ENCODE measurements at regions of chr19 and their contacts with region 1.

Region 1: DNA sequence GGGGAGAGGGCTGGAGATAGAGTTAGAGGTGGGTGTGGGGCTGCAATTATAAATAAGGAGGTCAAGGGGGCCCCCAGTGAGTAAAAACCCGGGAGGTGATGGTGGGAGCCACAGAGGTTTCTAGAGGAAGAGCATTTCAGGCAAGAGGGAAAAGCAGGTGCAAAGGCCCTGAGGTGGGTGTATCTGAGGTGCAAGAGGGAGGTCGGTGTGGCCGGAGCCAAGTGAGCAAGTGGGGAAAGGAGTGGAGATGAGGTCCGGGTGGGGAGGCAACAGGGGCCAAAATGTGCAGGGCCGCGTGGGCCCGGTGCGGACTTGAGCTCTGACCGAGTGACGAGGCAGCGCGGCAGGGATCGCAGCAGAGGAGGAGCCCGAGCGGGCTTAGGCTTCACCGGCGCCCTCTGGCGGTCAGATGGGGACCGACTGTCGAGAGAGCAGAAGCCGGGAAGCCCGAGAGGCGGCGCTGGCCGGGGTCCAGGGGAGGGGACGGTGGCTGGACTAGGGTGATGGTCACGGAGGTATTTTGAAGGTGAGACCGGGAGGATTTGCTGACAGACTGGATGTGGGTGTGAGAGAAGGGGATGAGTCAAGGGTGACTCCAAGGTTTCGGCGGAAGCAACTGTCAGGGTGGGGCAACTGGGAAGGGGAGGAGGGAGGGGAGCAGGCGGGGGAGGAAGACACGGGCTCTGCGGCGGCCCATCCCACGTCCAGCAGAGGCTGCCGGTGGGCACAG is 17.7 kb upstream of the SPACA4 start:
- DNase-seq: peak; percentile 93 to 96 (median 94)
- ATAC-seq: peak; percentile 92
- H3K4me3 ChIP-seq: peak overlapping the region; percentile 37
- H3K27ac ChIP-seq: peak overlapping the region; percentile 70; the same call in 2 of the 3 replicates
- H3K4me1 ChIP-seq: peaks cover 3 to 30% of the 10 kb centered on the region in 2 experiments; a peak in 2 of 5 replicates
- H3K27me3 ChIP-seq: no peaks in the 10 kb centered on the region
- CTCF ChIP-seq: peak; percentile 98 to 99 (median 99)
- EP300 ChIP-seq: no peak; the same call in none of the 2 replicates
- POLR2A ChIP-seq: peak; percentile 60
- RAD21 ChIP-seq: peak; percentile 60 to 77

Region 2: GRCh38 chr19:48321622-48322591 is 266.9 kb before region 1 on chr19:
- CTCF ChIA-PET with region 1: no interaction called
- POLR2A ChIA-PET with region 1: interaction called, 3 read pairs
- in situ Hi-C with region 1: loop called (anchors 5 kb)
- intact Hi-C with region 1: loop called (anchors 5 kb)
- DNase-seq: peak; percentile 95 to 98 (median 96)
- ATAC-seq: peak; percentile 80
- H3K4me3 ChIP-seq: peak overlapping the region; percentile 57
- H3K27ac ChIP-seq: peak overlapping the region; percentile 99
- H3K4me1 ChIP-seq: peaks cover 26 to 53% of the 10 kb centered on the region in 2 experiments
- H3K27me3 ChIP-seq: no peaks in the 10 kb centered on the region
- CTCF ChIP-seq: peak; percentile 20 to 37 (median 22); a peak in 4 of 6 replicates
- EP300 ChIP-seq: peak; percentile 64
- POLR2A ChIP-seq: peak; percentile 95
- RAD21 ChIP-seq: 0 out of 4 replicates have a peak, but pooled peaks of 1 of the 2 experiments have one; percentile 21

Region 3: GRCh38 chr19:48351341-48351752 is 237.5 kb before region 1 on chr19:
- CTCF ChIA-PET with region 1: no interaction called
- POLR2A ChIA-PET with region 1: no interaction called
- in situ Hi-C with region 1: no loop called
- intact Hi-C with region 1: loop called (anchors 1 kb)
- DNase-seq: peak; percentile 81 to 88 (median 85)
- ATAC-seq: peak; percentile 98
- H3K4me3 ChIP-seq: no peak overlapping the region
- H3K27ac ChIP-seq: no peak overlapping the region
- H3K4me1 ChIP-seq: peaks cover 9 to 13% of the 10 kb centered on the region in 2 experiments; a peak in 4 of 5 replicates
- H3K27me3 ChIP-seq: no peaks in the 10 kb centered on the region
- CTCF ChIP-seq: peak; percentile 86 to 94 (median 91)
- EP300 ChIP-seq: no peak
- POLR2A ChIP-seq: no peak
- RAD21 ChIP-seq: peak; percentile 38 to 68

Region 4: GRCh38 chr19:48501496-48502350 is 87.1 kb before region 1 on chr19:
- CTCF ChIA-PET with region 1: interaction called, 32 read pairs
- POLR2A ChIA-PET with region 1: interaction called, 10 read pairs
- in situ Hi-C with region 1: loop called (anchors 5 kb)
- intact Hi-C with region 1: loop called (anchors 1 kb)
- DNase-seq: peak; percentile 95 to 97 (median 96)
- ATAC-seq: peak; percentile 91
- H3K4me3 ChIP-seq: peak overlapping the region; percentile 51
- H3K27ac ChIP-seq: peak overlapping the region; percentile 73
- H3K4me1 ChIP-seq: peaks cover 10 to 50% of the 10 kb centered on the region in 2 experiments; a peak in 4 of 5 replicates
- H3K27me3 ChIP-seq: no peaks in the 10 kb centered on the region
- CTCF ChIP-seq: 0 out of 6 replicates have a peak, but pooled peaks of 1 of the 3 experiments have one; percentile 10
- EP300 ChIP-seq: no peak; the same call in 1 of the 2 replicates
- POLR2A ChIP-seq: peak; percentile 80
- RAD21 ChIP-seq: no peak

Region 5: DNA sequence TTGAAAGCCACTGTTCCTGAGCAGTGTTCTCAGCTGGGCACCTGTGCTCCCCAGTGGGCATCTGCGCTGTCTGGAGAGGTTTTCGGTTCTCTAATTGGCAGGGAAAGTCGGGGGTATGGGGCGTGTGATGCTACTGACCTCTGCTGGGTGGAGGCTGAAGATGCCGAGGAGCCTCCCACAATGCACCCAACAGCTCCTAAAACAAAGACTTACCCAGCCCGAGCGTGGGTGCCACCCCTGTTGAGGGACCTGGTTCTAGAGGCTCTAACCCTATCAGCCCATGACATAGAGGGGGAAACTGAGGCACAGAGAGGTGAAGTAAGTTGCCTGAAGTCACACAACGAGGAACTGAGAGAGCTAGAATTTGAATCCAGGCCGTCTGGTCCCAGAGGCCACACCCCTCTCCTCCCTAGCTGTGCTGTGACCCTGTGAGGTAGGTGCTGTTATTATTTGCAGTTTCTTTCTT is 20.0 kb after region 1 on chr19:
- CTCF ChIA-PET with region 1: no interaction called
- POLR2A ChIA-PET with region 1: interaction called, 8 read pairs
- in situ Hi-C with region 1: no loop called
- intact Hi-C with region 1: loop called (anchors 1 kb)
- DNase-seq: peak; percentile 67 to 73 (median 69)
- ATAC-seq: peak; percentile 86
- H3K4me3 ChIP-seq: no peak overlapping the region
- H3K27ac ChIP-seq: no peak overlapping the region
- H3K4me1 ChIP-seq: peaks cover 0 to 36% of the 10 kb centered on the region in 2 experiments; a peak in 3 of 5 replicates
- H3K27me3 ChIP-seq: no peaks in the 10 kb centered on the region
- CTCF ChIP-seq: peak; percentile 79 to 87 (median 81)
- EP300 ChIP-seq: no peak
- POLR2A ChIP-seq: no peak
- RAD21 ChIP-seq: peak; percentile 56 to 73

Region 6: GRCh38 chr19:48618916-48619691 is 30.3 kb after region 1 on chr19 and contains the starts of genes RPL18 and SPHK2:
- CTCF ChIA-PET with region 1: no interaction called
- POLR2A ChIA-PET with region 1: interaction called, 13 read pairs
- in situ Hi-C with region 1: no loop called
- intact Hi-C with region 1: no loop called
- DNase-seq: peak; percentile 91 to 99 (median 94)
- ATAC-seq: peak; percentile 84
- H3K4me3 ChIP-seq: peak within 1 kb of the TSS; percentile 64
- H3K27ac ChIP-seq: peak within 1 kb of the TSS; percentile 78
- H3K4me1 ChIP-seq: peaks cover 36 to 58% of the 10 kb centered on the region in 2 experiments; a peak in 4 of 5 replicates
- H3K27me3 ChIP-seq: no peaks in the 10 kb centered on the region
- CTCF ChIP-seq: peak in 1 of 3 experiments; percentile 2; a peak in 1 of 6 replicates
- EP300 ChIP-seq: peak; percentile 69
- POLR2A ChIP-seq: peak; percentile 99
- RAD21 ChIP-seq: no peak; a peak in 1 of 4 replicates
- polyA plus RNA-seq, gene RPL18: 312 to 402 TPM
- polyA plus RNA-seq, gene SPHK2: 0.10 to 0.17 TPM

Region 7: DNA sequence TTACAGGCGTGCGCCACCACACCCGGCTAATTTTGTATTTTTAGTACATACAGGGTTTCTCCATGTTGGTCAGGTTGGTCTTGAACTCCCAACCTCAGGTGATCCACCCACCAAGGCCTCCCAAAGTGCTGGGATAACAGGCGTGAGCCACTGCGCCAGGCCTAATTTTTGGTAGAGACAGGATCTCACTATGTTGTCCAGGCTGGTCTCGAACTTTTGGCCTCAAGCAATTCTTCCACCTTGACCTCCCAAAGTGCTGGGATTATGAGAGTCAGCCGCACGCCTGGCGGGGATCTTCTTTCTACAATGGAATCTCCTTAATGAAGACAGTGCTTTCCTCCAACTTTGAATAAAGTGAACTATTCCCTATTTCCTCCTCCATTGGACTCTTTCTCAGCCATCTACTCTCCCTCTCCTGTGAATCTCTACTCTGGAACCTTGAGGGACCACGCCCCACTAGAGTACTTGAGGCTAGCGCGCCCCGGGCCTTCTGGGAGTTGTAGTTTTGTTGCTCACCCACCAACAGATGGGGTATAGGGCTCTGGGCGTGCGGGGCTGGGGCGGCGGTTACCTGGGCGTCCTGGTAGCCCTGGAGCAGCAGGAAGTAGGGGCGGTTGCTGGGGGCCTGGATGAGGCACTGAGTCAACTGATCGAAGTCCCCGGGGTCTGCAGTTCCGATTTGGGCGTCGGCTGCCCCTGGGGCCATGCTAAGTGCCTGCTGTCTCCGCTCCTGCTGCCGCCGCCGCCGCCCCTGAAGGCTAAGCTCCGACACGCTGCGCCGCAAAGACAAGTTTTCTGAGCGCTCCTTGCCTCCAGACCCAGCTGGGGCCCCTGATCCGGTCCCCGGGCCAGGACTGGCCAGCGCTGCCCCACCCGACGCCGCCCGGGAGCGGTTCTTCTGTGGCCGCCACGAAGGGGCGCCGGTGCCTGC is 146.1 kb after region 1 on chr19:
- CTCF ChIA-PET with region 1: no interaction called
- POLR2A ChIA-PET with region 1: no interaction called
- in situ Hi-C with region 1: no loop called
- intact Hi-C with region 1: no loop called
- DNase-seq: no peak
- ATAC-seq: no peak
- H3K4me3 ChIP-seq: no peak overlapping the region
- H3K27ac ChIP-seq: no peak overlapping the region
- H3K4me1 ChIP-seq: peaks cover 22 to 34% of the 10 kb centered on the region in 2 experiments
- H3K27me3 ChIP-seq: no peaks in the 10 kb centered on the region
- CTCF ChIP-seq: no peak
- EP300 ChIP-seq: no peak
- POLR2A ChIP-seq: no peak
- RAD21 ChIP-seq: no peak

Measured in K562 (cell line).